Activated CD8-positive, alpha-beta memory T cell treated with anti-CD3 and anti-CD28 coated beads, Interleukin-2, amount 10 ng/mL, durations not matched to agents 7 days and 5 days (primary cell): ENCODE measurements at regions of chr22 and their contacts with region 1.

Region 1: DNA sequence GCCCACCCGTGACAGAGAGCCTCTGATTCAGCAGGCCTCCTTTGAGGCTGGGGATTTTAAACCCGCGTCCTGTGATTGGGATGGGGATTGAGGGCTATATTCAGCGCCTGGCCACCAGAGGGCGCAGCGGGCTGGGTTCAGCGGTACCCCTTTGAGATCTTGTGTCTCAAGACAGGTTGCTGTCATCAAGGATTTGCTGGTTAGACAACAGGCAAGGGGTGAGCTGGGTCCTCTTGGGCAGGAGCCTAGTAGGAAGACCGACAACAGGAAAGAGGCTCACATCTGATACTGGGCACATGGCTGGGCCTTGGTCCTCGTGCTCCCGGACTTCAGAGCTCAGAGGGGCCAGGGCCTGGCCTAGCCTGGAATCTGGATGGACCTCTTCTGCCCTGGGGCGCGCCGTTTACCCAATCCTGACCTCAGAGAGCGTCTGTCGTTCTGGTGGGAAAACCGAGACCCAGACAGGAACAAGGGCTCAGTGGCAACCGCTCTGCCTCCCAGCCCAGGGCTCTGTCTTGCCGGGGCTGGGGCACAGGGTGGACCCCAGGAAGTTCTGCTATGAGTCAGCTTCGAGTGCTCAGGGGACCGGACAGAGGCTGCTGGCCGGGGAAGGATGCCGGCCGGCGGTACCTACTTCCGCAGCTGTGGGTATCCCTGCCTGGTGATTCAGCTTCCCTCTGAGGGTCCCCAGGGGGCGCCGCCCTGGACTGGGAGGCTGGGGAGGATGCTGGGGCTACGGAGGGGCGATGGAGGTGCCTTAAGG is 929 bp upstream of the SLC35E4 start:
- DNase-seq: peak; percentile 93
- ATAC-seq: peak; percentile 67
- H3K4me3 Mint-ChIP-seq: peak overlapping the region; percentile 72
- H3K27ac Mint-ChIP-seq: peak overlapping the region; percentile 96
- H3K4me1 Mint-ChIP-seq: peaks cover 18% of the 10 kb centered on the region
- H3K27me3 Mint-ChIP-seq: no peaks in the 10 kb centered on the region

Region 2: GRCh38 chr22:30423982-30424963 is 210.4 kb before region 1 on chr22:
- CTCF ChIA-PET with region 1: no interaction called
- DNase-seq: peak; percentile 100
- ATAC-seq: peak; percentile 91
- H3K4me3 Mint-ChIP-seq: peak overlapping the region; percentile 96
- H3K27ac Mint-ChIP-seq: peak overlapping the region; percentile 96
- H3K4me1 Mint-ChIP-seq: peaks cover 54% of the 10 kb centered on the region
- H3K27me3 Mint-ChIP-seq: no peaks in the 10 kb centered on the region

Region 3: GRCh38 chr22:30435674-30436126 is 199.0 kb before region 1 on chr22:
- CTCF ChIA-PET with region 1: no interaction called
- DNase-seq: peak; percentile 93
- ATAC-seq: peak; percentile 93
- H3K4me3 Mint-ChIP-seq: peak overlapping the region; percentile 79
- H3K27ac Mint-ChIP-seq: peak overlapping the region; percentile 92
- H3K4me1 Mint-ChIP-seq: peaks cover 24% of the 10 kb centered on the region
- H3K27me3 Mint-ChIP-seq: peaks cover 14% of the 10 kb centered on the region

Region 4: GRCh38 chr22:30495041-30495784 is 139.4 kb before region 1 on chr22:
- CTCF ChIA-PET with region 1: no interaction called
- DNase-seq: no peak
- ATAC-seq: no peak
- H3K4me3 Mint-ChIP-seq: no peak overlapping the region
- H3K27ac Mint-ChIP-seq: no peak overlapping the region
- H3K4me1 Mint-ChIP-seq: no peaks in the 10 kb centered on the region
- H3K27me3 Mint-ChIP-seq: peaks cover 11% of the 10 kb centered on the region

Region 5: DNA sequence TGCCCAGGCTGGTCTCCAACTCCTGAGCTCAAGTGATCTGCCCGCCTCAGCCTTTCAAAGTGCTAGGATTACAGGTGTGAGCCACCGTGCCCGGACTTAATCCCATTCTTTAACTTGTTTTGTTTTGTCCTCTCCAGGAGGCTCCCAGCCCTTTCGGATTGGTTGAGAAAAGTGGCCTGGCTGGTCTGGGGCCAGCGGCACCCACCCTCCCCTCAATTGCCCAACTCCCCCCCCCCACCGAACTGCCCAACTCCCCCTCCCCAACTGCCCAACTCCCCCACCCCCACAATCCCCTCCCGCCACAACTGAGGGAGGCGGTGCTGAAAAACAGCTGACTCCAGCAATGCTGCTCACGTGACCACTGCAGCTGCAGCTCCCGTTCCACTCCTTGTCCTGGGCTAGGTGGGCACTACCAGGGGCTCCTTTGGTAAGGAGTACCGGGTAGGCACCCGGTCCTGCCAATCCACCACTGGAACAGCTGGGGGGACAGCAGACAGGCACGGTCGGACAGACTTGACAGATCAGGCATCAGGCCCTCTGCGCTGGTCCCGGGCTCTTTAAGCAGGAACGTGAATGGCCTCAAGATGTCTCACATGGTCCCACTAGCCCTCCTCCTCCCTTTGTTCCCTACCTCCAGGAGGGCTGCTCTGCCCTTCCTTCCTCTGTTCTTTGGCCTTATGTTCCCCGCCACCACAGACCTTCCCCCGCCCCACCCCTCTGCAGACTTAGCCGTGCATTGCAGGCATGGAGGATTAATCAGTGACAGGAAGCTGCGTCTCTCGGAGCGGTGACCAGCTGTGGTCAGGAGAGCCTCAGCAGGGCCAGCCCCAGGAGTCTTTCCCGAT is 28.0 kb before region 1 on chr22 and contains the start of gene TCN2:
- CTCF ChIA-PET with region 1: interaction called, 11 read pairs
- DNase-seq: peak; percentile 70
- ATAC-seq: peak; percentile 70
- H3K4me3 Mint-ChIP-seq: peak within 1 kb of the TSS; percentile 58
- H3K27ac Mint-ChIP-seq: no peak within 1 kb of the TSS
- H3K4me1 Mint-ChIP-seq: peaks cover 37% of the 10 kb centered on the region
- H3K27me3 Mint-ChIP-seq: no peaks in the 10 kb centered on the region
- total RNA-seq, gene TCN2: 0.19 to 0.41 TPM

Region 6: DNA sequence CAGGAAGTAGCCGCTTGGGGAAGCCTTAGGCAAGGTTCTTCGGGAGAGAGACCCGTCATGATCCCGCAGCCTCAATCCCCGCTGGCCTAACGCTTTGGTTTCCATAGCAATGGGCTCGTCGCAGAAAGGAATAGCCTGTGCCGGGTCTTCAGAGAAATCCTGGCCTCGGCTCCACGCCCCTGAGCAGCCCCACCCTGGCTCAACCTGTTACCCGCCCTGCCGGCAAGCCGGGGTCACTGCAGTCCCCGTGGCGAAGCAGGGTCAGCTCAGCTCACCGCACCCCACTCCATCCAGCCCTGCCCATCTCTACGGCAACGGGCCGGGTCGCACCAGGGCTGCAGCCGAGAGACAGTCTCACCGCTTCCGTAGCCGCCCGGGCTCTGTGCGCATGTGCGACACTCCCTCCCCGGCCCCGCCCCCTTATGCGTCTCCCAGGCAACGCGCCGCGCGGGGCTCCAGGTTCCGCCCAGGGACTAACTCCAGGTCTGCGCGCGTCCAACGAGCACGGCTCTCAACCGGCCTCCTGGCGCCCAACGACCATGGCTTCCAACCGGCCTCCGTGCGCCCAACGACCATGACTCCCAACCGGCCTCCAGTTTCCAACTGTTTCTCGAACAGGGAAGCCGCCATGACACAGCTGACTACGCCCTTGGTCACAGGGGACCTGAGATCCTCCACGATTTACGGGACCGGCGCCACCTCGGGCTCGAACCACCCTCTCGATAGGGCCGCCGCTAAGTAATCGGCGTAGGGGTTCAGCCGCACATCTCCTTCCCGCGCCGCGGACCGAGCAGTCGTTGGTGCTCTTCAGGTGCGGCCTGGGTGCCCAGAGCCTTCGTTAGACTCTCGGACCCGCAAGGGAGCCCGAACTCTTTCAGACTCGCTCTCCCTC is 33.1 kb after region 1 on chr22 and contains the start of gene DUSP18:
- CTCF ChIA-PET with region 1: interaction called, 17 read pairs
- DNase-seq: peak; percentile 96
- ATAC-seq: peak; percentile 97
- H3K4me3 Mint-ChIP-seq: peak within 1 kb of the TSS; percentile 98
- H3K27ac Mint-ChIP-seq: peak within 1 kb of the TSS; percentile 86
- H3K4me1 Mint-ChIP-seq: peaks cover 16% of the 10 kb centered on the region
- H3K27me3 Mint-ChIP-seq: peaks cover 4% of the 10 kb centered on the region
- total RNA-seq, gene DUSP18: 9.2 to 11.6 TPM

Region 7: GRCh38 chr22:30705710-30706651 is 71.3 kb after region 1 on chr22:
- CTCF ChIA-PET with region 1: interaction called, 11 read pairs
- DNase-seq: peak; percentile 77
- ATAC-seq: peak; percentile 79
- H3K4me3 Mint-ChIP-seq: peak overlapping the region; percentile 15
- H3K27ac Mint-ChIP-seq: peak overlapping the region; percentile 93
- H3K4me1 Mint-ChIP-seq: peaks cover 42% of the 10 kb centered on the region
- H3K27me3 Mint-ChIP-seq: no peaks in the 10 kb centered on the region

Region 8: GRCh38 chr22:30754971-30755756 is 120.5 kb after region 1 on chr22:
- CTCF ChIA-PET with region 1: interaction called, 186 read pairs
- DNase-seq: peak; percentile 79
- ATAC-seq: peak; percentile 90
- H3K4me3 Mint-ChIP-seq: no peak overlapping the region
- H3K27ac Mint-ChIP-seq: no peak overlapping the region
- H3K4me1 Mint-ChIP-seq: peaks cover 10% of the 10 kb centered on the region
- H3K27me3 Mint-ChIP-seq: no peaks in the 10 kb centered on the region

Region 9: GRCh38 chr22:30920407-30920806 is 285.8 kb after region 1 on chr22:
- CTCF ChIA-PET with region 1: interaction called, 30 read pairs
- DNase-seq: peak; percentile 88
- ATAC-seq: peak; percentile 79
- H3K4me3 Mint-ChIP-seq: peak overlapping the region; percentile 36
- H3K27ac Mint-ChIP-seq: no peak overlapping the region
- H3K4me1 Mint-ChIP-seq: peaks cover 16% of the 10 kb centered on the region
- H3K27me3 Mint-ChIP-seq: no peaks in the 10 kb centered on the region